ENCODE measurements at regions of chr11 and their contacts with region 1.

Region 1: GRCh38 chr11:61024938-61025820 is 53.7 kb downstream of the CD6 start:
- DNase-seq: no peak
- H3K4me3 Mint-ChIP-seq: no peak overlapping the region
- H3K27ac Mint-ChIP-seq: no peak overlapping the region
- H3K4me1 Mint-ChIP-seq: peaks cover 9% of the 10 kb centered on the region
- H3K27me3 Mint-ChIP-seq: peaks cover 84% of the 10 kb centered on the region
- CTCF ChIP-seq: no peak

Region 2: GRCh38 chr11:61061081-61061826 is 36.1 kb after region 1 on chr11:
- CTCF ChIA-PET with region 1: interaction called, 5 read pairs
- intact Hi-C with region 1: loop called (anchors 1 kb)
- DNase-seq: peak; percentile 55
- H3K4me3 Mint-ChIP-seq: no peak overlapping the region
- H3K27ac Mint-ChIP-seq: no peak overlapping the region
- H3K4me1 Mint-ChIP-seq: peaks cover 16% of the 10 kb centered on the region
- H3K27me3 Mint-ChIP-seq: no peaks in the 10 kb centered on the region
- CTCF ChIP-seq: no peak

Measured in Calu3 (cell line).